PC-3 (cell line): ENCODE measurements at regions of chr14 and their contacts with region 1.

Region 1: GRCh38 chr14:57871459-57872080 is 5.7 kb upstream of the SLC35F4 start:
- DNase-seq: peak; percentile 93
- ATAC-seq: peak; percentile 94
- H3K4me3 ChIP-seq: no peak overlapping the region
- H3K27ac ChIP-seq: no peak overlapping the region
- H3K4me1 ChIP-seq: peaks cover 3% of the 10 kb centered on the region; the same call in 1 of the 2 replicates
- H3K27me3 ChIP-seq: peaks cover 41% of the 10 kb centered on the region
- CTCF ChIP-seq: peak; percentile 100

Region 2: DNA sequence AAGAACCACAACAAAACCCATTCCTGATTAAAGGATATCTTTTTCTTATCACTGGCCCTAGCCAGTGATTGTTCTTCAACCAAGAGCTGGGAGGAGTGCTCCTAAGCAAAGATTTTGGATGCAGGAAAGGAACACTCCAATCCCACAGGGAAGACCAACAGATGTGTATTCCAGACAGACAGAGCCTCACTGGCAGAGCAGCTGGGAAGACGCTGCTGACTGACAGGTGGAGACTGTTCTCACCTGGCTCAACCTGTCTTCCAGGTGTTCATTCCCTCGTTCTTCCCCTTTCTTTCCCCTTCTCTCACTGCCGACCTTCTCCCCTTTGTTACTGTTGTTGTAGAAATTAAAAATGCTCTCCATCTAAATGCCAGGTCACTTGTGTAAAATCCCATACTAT is 288.2 kb before region 1 on chr14:
- CTCF ChIA-PET with region 1: interaction called, 10 read pairs
- POLR2A ChIA-PET with region 1: no interaction called
- intact Hi-C with region 1: no loop called
- DNase-seq: no peak
- ATAC-seq: no peak
- H3K4me3 ChIP-seq: no peak overlapping the region
- H3K27ac ChIP-seq: no peak overlapping the region
- H3K4me1 ChIP-seq: no peaks in the 10 kb centered on the region
- H3K27me3 ChIP-seq: peaks cover 74% of the 10 kb centered on the region
- CTCF ChIP-seq: no peak

Region 3: DNA sequence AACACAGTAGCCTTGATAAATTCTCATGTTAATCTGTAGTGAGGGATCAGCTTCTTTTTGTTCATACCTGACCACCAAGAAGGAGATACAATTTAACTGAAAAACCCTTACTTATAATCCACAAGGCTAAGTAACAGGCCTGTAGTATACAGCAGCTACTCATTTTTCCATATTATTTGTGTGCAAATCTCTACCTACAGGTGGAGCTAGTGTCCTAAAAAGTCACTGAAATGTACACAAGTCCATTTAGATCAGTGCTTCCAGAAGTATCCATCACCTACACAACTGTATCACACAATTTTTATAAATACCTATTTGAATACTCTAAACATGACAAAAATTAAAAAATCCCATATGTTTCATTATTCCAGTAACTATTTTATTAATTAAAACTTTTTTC is 178.9 kb before region 1 on chr14:
- CTCF ChIA-PET with region 1: interaction called, 12 read pairs
- POLR2A ChIA-PET with region 1: no interaction called
- intact Hi-C with region 1: loop called (anchors 1 kb)
- DNase-seq: peak; percentile 94
- ATAC-seq: peak; percentile 98
- H3K4me3 ChIP-seq: no peak overlapping the region
- H3K27ac ChIP-seq: no peak overlapping the region
- H3K4me1 ChIP-seq: no peaks in the 10 kb centered on the region
- H3K27me3 ChIP-seq: peaks cover 24% of the 10 kb centered on the region
- CTCF ChIP-seq: peak; percentile 99

Region 4: GRCh38 chr14:58060077-58060476 is 188.5 kb after region 1 on chr14:
- CTCF ChIA-PET with region 1: no interaction called
- POLR2A ChIA-PET with region 1: no interaction called
- intact Hi-C with region 1: no loop called
- DNase-seq: peak; percentile 36
- ATAC-seq: no peak
- H3K4me3 ChIP-seq: no peak overlapping the region
- H3K27ac ChIP-seq: no peak overlapping the region
- H3K4me1 ChIP-seq: no peaks in the 10 kb centered on the region
- H3K27me3 ChIP-seq: peaks cover 87% of the 10 kb centered on the region
- CTCF ChIP-seq: no peak